A549 (cell line): ENCODE measurements at regions of chr12 and their contacts with region 1.

Region 1: DNA sequence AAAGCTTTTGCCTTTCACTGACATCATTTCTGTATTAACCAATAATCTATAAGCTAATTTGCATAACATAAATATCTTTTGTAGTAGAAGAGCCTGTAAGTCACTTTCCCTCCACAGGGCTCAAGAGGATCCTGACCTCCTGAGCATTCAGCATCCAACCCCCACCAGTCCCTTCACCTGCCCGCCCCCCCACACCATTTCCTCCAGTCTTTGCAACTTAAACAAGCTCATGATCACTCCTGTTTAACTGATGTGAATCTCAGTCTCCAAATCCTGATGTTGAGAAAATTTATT is 12.0 kb upstream of the CRY1 start:
- DNase-seq: no peak
- ATAC-seq: peak; percentile 60; a peak in 4 of 6 replicates
- H3K4me3 ChIP-seq: no peak overlapping the region
- H3K27ac ChIP-seq: no peak overlapping the region
- H3K4me1 ChIP-seq: 0 out of 3 replicates have a peak, but pooled peaks cover 4% of the 10 kb centered on the region
- CTCF ChIP-seq: no peak
- EP300 ChIP-seq: no peak
- POLR2A ChIP-seq: no peak
- RAD21 ChIP-seq: no peak

Region 2: GRCh38 chr12:107093417-107094182 is 11.8 kb before region 1 on chr12 and contains the start of gene CRY1:
- CTCF ChIA-PET with region 1: interaction called, 69 read pairs
- POLR2A ChIA-PET with region 1: interaction called, 8 read pairs
- DNase-seq: peak; percentile 79 to 98
- ATAC-seq: peak; percentile 84 to 88
- H3K4me3 ChIP-seq: peak within 1 kb of the TSS; percentile 73
- H3K27ac ChIP-seq: peak within 1 kb of the TSS; percentile 74 to 89
- H3K4me1 ChIP-seq: peaks cover 17% of the 10 kb centered on the region
- CTCF ChIP-seq: no peak
- EP300 ChIP-seq: no peak
- POLR2A ChIP-seq: peak; percentile 59
- RAD21 ChIP-seq: no peak
- polyA plus RNA-seq, gene CRY1: 17.6 and 26.1 TPM in 2 replicates

Region 3: DNA sequence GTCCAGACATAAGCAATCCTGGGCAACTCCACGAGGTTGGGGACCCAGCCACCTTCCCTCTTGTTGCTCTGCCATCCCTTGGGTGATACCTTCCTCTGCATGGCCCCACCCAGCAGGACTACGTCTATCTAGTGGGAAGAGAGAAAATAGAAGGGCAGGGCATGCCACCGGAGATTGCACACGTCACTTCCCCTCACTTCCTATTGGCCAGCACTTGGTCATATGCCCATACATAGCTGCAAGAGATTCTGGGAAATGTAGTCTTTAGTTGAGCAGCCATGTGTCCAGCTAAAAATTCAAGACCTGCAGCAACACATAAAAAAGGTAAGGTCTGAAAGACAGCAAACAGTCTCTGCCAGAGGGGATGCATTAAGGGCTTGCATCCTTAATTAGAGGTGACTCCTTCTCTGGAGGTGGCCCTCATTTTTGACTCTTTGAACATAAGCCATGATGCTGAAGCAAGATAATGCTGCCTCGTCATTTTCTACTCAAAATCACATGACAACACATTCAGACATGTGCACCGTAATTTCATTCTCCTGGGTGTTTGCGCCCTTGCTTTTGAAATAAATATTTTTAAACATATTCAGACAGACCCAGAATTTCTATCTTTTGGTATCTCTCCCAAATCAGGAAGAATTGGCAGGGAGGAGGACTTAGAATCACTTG is 488.5 kb after region 1 on chr12:
- CTCF ChIA-PET with region 1: no interaction called
- POLR2A ChIA-PET with region 1: no interaction called
- DNase-seq: peak in 1 of 2 experiments; percentile 52
- ATAC-seq: no peak
- H3K4me3 ChIP-seq: no peak overlapping the region
- H3K27ac ChIP-seq: no peak overlapping the region
- H3K4me1 ChIP-seq: no peaks in the 10 kb centered on the region; the same call in 2 of the 3 replicates
- CTCF ChIP-seq: no peak
- EP300 ChIP-seq: no peak
- POLR2A ChIP-seq: no peak
- RAD21 ChIP-seq: no peak